Heart right ventricle (tissue), 16 donors: ENCODE measurements at regions of chr14 and their contacts with region 1.

Region 1: GRCh38 chr14:32244404-32244803 is 41.3 kb upstream of the RNU6-8 start:
- DNase-seq: no peak
- ATAC-seq: peak in 3 of 8 donors; percentile 25 to 51 (median 37)
- H3K4me3 ChIP-seq: no peak overlapping the region
- H3K27ac ChIP-seq: no peak overlapping the region
- H3K4me1 ChIP-seq: peaks cover 0 to 14% (median 0%) of the 10 kb centered on the region in 9 donors
- H3K27me3 ChIP-seq: no peaks in the 10 kb centered on the region
- CTCF ChIP-seq: peak in 2 of 9 donors; percentile 24

Region 2: DNA sequence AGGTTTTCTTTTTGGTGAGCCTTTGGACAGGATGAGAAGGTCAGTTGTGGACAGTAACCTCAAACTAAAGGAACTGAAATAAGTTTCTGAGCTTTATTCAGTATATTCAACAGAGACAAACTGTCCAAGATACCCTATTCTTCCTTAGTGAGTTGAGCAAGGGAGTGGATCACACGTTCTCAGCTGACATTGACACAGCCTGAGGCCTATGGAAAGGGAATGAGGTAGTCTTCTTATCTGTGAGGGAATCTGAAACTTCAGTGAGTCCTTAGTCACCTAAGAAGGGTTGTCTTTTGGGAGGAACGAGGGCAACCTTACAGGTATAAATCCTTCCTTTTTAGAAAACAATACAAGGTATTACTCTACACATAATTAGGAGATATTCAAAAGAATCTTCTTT is 688.2 kb before region 1 on chr14:
- intact Hi-C with region 1: no loop called
- DNase-seq: no peak
- ATAC-seq: no peak
- H3K4me3 ChIP-seq: no peak overlapping the region
- H3K27ac ChIP-seq: no peak overlapping the region
- H3K4me1 ChIP-seq: peaks cover 0 to 7% (median 0%) of the 10 kb centered on the region in 9 donors
- H3K27me3 ChIP-seq: peaks cover 0 to 14% (median 0%) of the 10 kb centered on the region in 7 donors
- CTCF ChIP-seq: no peak

Region 3: GRCh38 chr14:32129124-32129523 is 115.3 kb before region 1 on chr14:
- intact Hi-C with region 1: no loop called
- DNase-seq: no peak
- ATAC-seq: peak in 3 of 8 donors; percentile 46 to 65 (median 64)
- H3K4me3 ChIP-seq: no peak overlapping the region
- H3K27ac ChIP-seq: peak overlapping the region in 9 of 10 donors; percentile 10 to 55 (median 27)
- H3K4me1 ChIP-seq: peaks cover 0 to 39% (median 24%) of the 10 kb centered on the region in 9 donors
- H3K27me3 ChIP-seq: no peaks in the 10 kb centered on the region
- CTCF ChIP-seq: no peak

Region 4: GRCh38 chr14:32202998-32203882 is 41.2 kb before region 1 on chr14 and contains the start of gene RNU6-8:
- intact Hi-C with region 1: loop called in 1 of 10 experiments (anchors 5 kb)
- DNase-seq: peak; percentile 83 to 88
- ATAC-seq: peak; percentile 90 to 95 (median 93)
- H3K4me3 ChIP-seq: peak within 1 kb of the TSS; percentile 36 to 77 (median 66)
- H3K27ac ChIP-seq: peak within 1 kb of the TSS; percentile 64 to 94 (median 90)
- H3K4me1 ChIP-seq: peaks cover 0 to 42% (median 15%) of the 10 kb centered on the region in 9 donors
- H3K27me3 ChIP-seq: peaks cover 0 to 29% (median 0%) of the 10 kb centered on the region in 7 donors
- CTCF ChIP-seq: peak in 1 of 9 donors; percentile 12
- total RNA-seq, gene RNU6-8: not detected